HEK293 (cell line): ENCODE measurements at regions of chr2 and their contacts with region 1.

Region 1: DNA sequence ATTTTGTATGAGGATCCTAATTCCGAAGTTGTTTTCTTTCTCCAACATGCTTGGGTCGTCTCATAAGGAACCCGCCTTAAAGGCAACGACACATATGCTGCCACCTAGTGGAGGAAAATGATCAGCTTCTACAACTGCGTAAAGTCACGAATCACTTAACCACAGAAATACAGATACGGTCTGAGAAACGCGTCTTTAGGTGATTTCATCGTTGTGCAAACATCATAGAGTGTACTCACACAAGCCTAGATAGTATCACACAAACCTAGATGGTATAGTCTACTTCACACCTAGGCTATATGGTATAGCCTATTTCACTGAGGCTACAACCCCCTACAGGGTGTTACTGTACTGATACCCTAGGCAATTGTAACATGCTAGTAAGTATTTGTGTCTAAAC is 13.1 kb downstream of the GNLY start:
- H3K4me3 ChIP-seq: no peak overlapping the region
- H3K27ac ChIP-seq: no peak overlapping the region
- H3K4me1 ChIP-seq: no peaks in the 10 kb centered on the region
- CTCF ChIP-seq: peak; percentile 80

Region 2: DNA sequence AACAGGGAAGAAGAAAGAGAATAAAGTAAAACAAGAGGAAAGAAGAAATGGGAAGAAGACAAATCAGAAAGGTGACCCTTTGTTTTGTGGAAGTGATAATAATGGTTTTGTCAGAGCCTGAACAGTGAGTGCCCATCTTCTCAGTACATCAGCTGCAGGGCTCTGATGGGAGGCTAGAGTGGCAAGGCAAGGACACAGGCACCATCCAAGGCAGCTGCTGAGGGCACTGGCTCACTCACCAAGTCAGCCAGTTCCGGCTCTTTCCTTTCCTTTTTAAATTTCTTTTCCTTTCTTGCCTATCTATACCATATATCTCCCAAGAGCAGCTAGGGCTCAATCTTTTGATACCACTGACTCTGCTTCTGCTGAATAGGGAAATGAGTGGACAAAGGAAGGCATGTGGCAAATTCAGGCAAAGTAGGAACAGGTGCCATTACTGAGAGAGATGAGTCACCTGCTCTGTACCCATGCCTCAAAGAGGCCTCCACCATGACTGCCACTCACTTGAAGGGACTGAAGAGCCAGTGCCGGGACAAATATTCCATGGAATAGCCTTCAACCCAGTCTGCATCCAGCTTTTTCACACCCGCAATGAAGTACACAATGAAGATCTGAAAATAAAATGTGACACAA is 152.2 kb before region 1 on chr2:
- CTCF ChIA-PET with region 1: no interaction called
- POLR2A ChIA-PET with region 1: no interaction called
- H3K4me3 ChIP-seq: no peak overlapping the region
- H3K27ac ChIP-seq: no peak overlapping the region
- H3K4me1 ChIP-seq: no peaks in the 10 kb centered on the region
- CTCF ChIP-seq: no peak

Region 3: DNA sequence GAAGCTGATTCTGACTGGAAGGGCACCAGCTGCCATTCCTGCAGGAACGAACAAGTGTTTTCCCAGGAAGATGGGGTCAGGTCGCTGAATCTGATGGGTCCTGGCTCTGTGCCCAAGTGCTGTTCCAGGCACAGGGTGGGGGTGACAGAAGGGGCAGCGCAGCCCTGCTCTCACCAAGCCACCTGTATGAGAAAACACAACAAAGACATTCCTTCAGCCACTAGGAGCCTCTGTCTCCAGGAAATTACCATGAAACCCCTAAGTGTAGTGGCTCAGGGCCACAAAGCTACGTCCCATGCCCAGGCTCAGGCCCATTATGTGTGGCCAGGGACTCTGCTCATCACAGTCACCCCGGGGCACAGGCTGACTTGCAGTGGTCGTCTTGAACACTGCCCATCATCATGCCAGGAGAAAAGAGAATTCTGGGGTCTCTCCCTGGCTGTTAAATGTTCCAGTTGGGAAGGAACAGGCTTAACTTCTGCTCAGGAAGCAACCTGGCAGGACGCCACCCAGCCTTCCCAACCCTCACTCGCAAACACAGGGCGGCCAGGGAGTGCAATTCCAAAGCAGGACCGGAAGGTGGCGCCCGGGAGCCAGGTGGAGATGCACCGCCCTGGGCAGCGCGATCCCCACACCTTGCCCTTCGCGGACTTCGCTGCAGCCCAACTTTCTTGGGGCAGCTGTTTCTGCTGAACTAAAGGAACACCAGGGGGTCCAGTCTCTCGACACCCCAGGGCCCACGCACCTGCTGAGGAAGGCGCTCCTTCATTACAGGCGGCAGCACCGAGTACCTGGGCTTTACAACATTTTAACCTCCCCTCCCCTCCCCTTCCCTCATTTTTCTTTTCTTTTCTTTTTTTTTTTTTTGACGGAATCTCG is 28.3 kb before region 1 on chr2:
- CTCF ChIA-PET with region 1: interaction called, 28 read pairs
- POLR2A ChIA-PET with region 1: no interaction called
- H3K4me3 ChIP-seq: peak overlapping the region; percentile 13; the same call in 1 of the 2 replicates
- H3K27ac ChIP-seq: no peak overlapping the region
- H3K4me1 ChIP-seq: no peaks in the 10 kb centered on the region
- CTCF ChIP-seq: peak; percentile 90

Region 4: GRCh38 chr2:85694052-85695025 is 13.0 kb before region 1 on chr2 and contains the start of gene GNLY:
- CTCF ChIA-PET with region 1: interaction called, 54 read pairs
- POLR2A ChIA-PET with region 1: no interaction called
- H3K4me3 ChIP-seq: no peak within 1 kb of the TSS
- H3K27ac ChIP-seq: no peak within 1 kb of the TSS
- H3K4me1 ChIP-seq: no peaks in the 10 kb centered on the region
- CTCF ChIP-seq: no peak